ENCODE measurements at regions of chr22 and their contacts with region 1.

Region 1: DNA sequence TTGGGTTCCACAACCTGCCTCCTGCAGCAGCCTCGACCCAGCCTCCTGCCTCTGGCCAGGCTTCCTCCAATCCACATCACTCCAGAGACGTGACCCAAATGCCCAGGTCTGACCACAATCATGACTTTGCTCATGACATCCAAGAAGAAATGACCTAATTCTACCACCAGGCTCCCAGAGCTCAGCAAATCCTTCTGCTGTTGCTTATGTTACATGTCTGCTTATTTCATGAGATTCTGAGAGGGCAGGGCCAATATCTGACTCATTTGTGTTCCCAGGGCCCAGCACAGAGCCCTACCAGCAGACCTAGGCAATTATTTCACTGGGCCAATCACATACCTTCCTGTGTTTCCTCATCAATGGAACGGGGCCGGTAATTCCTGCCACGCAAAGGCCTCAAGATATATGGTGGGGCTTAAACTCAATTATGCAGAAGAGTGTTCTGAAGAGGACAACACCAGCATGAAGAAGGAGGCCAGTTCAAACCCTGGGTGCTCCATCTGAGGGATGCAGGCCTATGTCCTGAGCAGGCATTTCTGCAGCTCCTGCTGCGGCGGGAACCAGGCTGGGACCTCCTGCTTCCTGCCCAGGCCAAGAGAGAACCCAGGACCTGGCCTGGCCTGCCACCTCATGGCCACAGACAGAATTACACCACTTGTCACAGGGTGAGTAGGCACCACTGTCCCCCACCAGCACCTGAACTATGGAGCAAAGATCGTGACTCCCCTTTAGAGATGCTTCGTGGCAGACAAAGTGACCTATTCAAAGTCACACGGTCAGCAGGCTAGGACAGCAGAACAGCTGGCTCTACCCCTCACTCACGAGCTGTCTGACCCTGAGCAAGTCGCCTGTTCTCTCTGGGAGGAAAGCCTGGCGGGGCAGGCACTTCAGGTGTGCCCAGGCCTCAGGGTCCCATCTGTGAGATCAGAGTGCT is 5.9 kb downstream of the CENPM start:
- DNase-seq: peak; percentile 87
- H3K4me3 ChIP-seq: no peak overlapping the region
- H3K27ac ChIP-seq: peak overlapping the region; percentile 57
- H3K4me1 ChIP-seq: peaks cover 5% of the 10 kb centered on the region
- H3K27me3 ChIP-seq: no peaks in the 10 kb centered on the region
- CTCF ChIP-seq: peak; percentile 85

Region 2: GRCh38 chr22:41697126-41697775 is 243.8 kb before region 1 on chr22:
- CTCF ChIA-PET with region 1: interaction called, 32 read pairs
- POLR2A ChIA-PET with region 1: interaction called, 7 read pairs
- intact Hi-C with region 1: loop called (anchors 2 kb)
- DNase-seq: peak; percentile 92
- H3K4me3 ChIP-seq: peak overlapping the region; percentile 17
- H3K27ac ChIP-seq: peak overlapping the region; percentile 41
- H3K4me1 ChIP-seq: peaks cover 12% of the 10 kb centered on the region
- H3K27me3 ChIP-seq: no peaks in the 10 kb centered on the region
- CTCF ChIP-seq: peak; percentile 100

Region 3: GRCh38 chr22:42022162-42022835 is 81.2 kb after region 1 on chr22:
- CTCF ChIA-PET with region 1: no interaction called
- POLR2A ChIA-PET with region 1: no interaction called
- intact Hi-C with region 1: no loop called
- DNase-seq: no peak
- H3K4me3 ChIP-seq: no peak overlapping the region
- H3K27ac ChIP-seq: no peak overlapping the region
- H3K4me1 ChIP-seq: no peaks in the 10 kb centered on the region
- H3K27me3 ChIP-seq: peaks cover 2% of the 10 kb centered on the region
- CTCF ChIP-seq: no peak